Activated T-helper 2 cell treated with anti-CD3 and anti-CD28 coated beads, Interferon-gamma antibody, Interleukin-2, Interleukin-4, amounts not matched to agents 10 μg/mL and 5 μg/mL and 100 μg/mL, durations not matched to agents 14 hours and 24 hours and 36 hours (primary cell): ENCODE measurements at regions of chr11 and their contacts with region 1.

Region 1: DNA sequence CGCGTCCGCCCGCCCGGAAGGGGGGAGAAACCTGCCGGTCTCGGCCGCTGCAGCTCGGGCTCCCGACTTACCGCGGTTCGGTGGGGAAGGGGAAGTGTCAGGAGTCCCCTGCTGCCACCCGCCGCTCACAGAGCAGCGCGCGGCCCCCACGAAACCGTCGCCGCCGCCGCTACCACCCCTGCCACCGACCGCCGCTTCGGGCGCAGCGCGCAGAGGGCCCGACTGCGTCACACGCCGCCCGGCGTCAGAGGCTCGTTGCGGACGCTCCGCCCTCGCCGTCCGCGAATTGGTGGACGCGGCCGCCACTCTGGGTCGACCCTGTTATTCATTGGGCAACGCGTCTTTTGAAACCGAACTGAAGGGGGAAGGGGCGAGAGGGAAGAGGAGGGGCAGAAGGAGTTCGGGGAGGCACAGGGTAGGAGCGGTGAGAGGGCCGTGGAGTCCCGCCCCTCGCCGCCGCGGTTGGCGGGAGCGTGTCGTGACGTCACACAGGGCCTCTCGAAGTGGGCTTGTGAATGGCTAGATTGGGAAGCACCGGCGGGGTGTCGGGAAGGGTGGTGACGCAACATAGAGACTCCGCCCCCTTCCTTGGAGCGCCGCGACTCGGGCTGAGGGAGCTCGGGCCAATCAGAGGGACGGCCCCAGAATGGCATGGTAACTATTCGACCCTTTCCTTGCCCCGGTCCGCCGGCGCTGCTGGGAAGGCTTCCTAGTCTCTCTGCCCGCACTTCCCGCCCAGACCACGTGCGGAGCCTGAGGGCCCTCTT is at the start of gene NUP98:
- DNase-seq: peak; percentile 100
- H3K4me3 Mint-ChIP-seq: peak within 1 kb of the TSS; percentile 98
- H3K27ac Mint-ChIP-seq: peak within 1 kb of the TSS; percentile 95
- H3K4me1 Mint-ChIP-seq: peaks cover 33% of the 10 kb centered on the region
- H3K27me3 Mint-ChIP-seq: no peaks in the 10 kb centered on the region
- total RNA-seq, gene NUP98: 123 and 131 TPM in 2 replicates

Region 2: GRCh38 chr11:3781423-3781822 is 16.1 kb before region 1 on chr11:
- intact Hi-C with region 1: loop called (anchors 1 kb)
- DNase-seq: no peak
- H3K4me3 Mint-ChIP-seq: no peak overlapping the region
- H3K27ac Mint-ChIP-seq: peak overlapping the region; percentile 64
- H3K4me1 Mint-ChIP-seq: peaks cover 45% of the 10 kb centered on the region
- H3K27me3 Mint-ChIP-seq: no peaks in the 10 kb centered on the region

Region 3: GRCh38 chr11:3807909-3808860 is 10.7 kb after region 1 on chr11 and contains the start of gene PGAP2:
- intact Hi-C with region 1: loop called (anchors 1 kb)
- DNase-seq: peak; percentile 53
- H3K4me3 Mint-ChIP-seq: peak within 1 kb of the TSS; percentile 96
- H3K27ac Mint-ChIP-seq: peak within 1 kb of the TSS; percentile 88
- H3K4me1 Mint-ChIP-seq: peaks cover 22% of the 10 kb centered on the region
- H3K27me3 Mint-ChIP-seq: no peaks in the 10 kb centered on the region
- total RNA-seq, gene PGAP2: 23.8 and 30.3 TPM in 2 replicates

Region 4: DNA sequence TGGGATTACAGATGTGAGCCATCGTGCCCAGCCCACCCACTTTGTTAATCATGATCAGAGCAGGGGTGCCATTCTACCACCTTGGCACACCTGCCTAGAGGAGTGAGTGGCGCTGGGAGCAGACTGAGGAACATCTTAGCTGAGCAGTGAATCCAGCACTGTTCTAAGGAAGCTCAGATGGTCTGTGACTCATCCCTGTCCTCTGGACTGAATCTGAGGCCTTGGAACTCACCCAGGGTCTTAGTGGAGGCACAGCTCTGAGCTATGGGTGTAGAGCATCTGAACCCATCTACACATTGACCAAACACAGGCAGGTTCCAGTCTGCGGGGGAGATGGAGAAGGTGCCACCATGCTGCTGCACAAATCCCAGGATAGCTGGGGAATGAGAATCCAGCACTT is 25.8 kb after region 1 on chr11:
- intact Hi-C with region 1: no loop called
- DNase-seq: no peak
- H3K4me3 Mint-ChIP-seq: no peak overlapping the region
- H3K27ac Mint-ChIP-seq: peak overlapping the region; percentile 55
- H3K4me1 Mint-ChIP-seq: peaks cover 24% of the 10 kb centered on the region
- H3K27me3 Mint-ChIP-seq: no peaks in the 10 kb centered on the region

Region 5: GRCh38 chr11:4094348-4095291 is 297.1 kb after region 1 on chr11 and contains the start of gene RRM1:
- intact Hi-C with region 1: loop called (anchors 1 kb)
- DNase-seq: peak; percentile 92
- H3K4me3 Mint-ChIP-seq: peak within 1 kb of the TSS; percentile 94
- H3K27ac Mint-ChIP-seq: peak within 1 kb of the TSS; percentile 88
- H3K4me1 Mint-ChIP-seq: peaks cover 75% of the 10 kb centered on the region
- H3K27me3 Mint-ChIP-seq: no peaks in the 10 kb centered on the region
- total RNA-seq, gene RRM1: 142 and 146 TPM in 2 replicates